AG04450 (cell line): ENCODE measurements at regions of chr7 and their contacts with region 1.

Region 1: GRCh38 chr7:7347045-7347444 is 164.7 kb downstream of the C1GALT1 start:
- DNase-seq: no peak
- H3K4me3 ChIP-seq: no peak overlapping the region
- H3K27ac ChIP-seq: no peak overlapping the region
- H3K27me3 ChIP-seq: no peaks in the 10 kb centered on the region
- CTCF ChIP-seq: no peak

Region 2: DNA sequence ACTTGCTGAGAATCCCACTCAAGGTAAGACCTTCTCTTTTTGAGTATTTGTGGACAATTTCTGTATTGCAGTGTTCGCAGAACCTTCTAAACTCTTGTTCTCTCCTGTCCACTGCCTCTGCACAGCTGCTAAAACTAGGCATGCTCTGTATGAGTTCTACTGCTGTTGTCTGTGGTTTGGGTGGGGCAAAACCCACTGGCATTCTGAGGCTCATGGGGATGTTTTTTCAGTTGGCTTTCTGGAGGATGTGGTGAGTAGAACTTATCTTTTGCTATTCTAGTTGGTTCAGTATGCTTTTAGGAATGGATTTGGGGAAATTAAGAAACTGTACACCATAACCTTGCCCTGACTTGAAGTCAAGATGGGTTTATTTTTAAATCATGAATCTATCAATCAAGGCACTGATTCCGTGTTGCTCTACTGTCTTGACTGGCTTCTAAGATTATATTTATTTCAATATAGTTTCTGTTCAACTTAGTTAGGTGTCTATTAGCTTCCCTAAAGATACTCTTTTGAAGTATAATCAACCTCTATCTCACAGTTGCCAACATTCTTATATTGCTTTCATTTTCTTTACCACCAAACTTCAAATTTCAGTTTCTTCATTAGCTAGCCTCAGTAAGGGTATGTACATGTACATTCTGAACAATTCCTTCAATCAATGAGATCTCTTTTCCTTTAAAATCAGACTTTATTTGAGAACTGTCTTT is 189.7 kb before region 1 on chr7:
- CTCF ChIA-PET with region 1: no interaction called
- POLR2A ChIA-PET with region 1: interaction called, 11 read pairs
- DNase-seq: peak; percentile 8
- H3K4me3 ChIP-seq: peak overlapping the region; percentile 8
- H3K27ac ChIP-seq: no peak overlapping the region
- H3K27me3 ChIP-seq: no peaks in the 10 kb centered on the region
- CTCF ChIP-seq: no peak

Region 3: DNA sequence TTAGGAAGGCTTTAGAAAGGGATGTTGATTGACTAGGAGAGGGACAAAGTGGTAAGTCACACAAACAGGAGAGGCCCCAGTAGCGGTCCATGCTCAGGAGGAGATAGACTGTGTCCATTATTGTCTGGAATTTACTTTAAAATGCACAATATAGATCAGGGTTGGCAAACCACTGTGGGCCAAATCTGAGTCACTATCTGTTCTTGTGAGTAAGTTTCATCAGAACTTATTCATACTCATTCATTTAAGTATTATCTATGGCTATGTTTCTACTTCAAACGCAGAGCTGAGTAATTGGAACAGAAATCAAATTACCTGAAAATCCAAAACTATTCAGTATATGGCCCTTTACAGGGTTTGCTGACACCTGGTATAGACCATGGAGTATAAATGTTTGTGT is 22.1 kb after region 1 on chr7:
- CTCF ChIA-PET with region 1: no interaction called
- POLR2A ChIA-PET with region 1: no interaction called
- DNase-seq: no peak
- H3K4me3 ChIP-seq: no peak overlapping the region
- H3K27ac ChIP-seq: no peak overlapping the region
- H3K27me3 ChIP-seq: no peaks in the 10 kb centered on the region
- CTCF ChIP-seq: no peak